AG04449 (cell line): ENCODE measurements at regions of chr22 and their contacts with region 1.

Region 1: GRCh38 chr22:45096256-45096907 is 67.3 kb upstream of the NUP50 start:
- DNase-seq: no peak
- H3K4me3 ChIP-seq: no peak overlapping the region
- CTCF ChIP-seq: peak; percentile 84

Region 2: GRCh38 chr22:44701824-44702478 is 394.4 kb before region 1 on chr22 and contains the start of gene PRR5:
- CTCF ChIA-PET with region 1: interaction called, 10 read pairs
- POLR2A ChIA-PET with region 1: no interaction called
- DNase-seq: peak; percentile 63
- H3K4me3 ChIP-seq: peak within 1 kb of the TSS; percentile 65
- CTCF ChIP-seq: no peak

Region 3: GRCh38 chr22:44819971-44820631 is 276.3 kb before region 1 on chr22:
- CTCF ChIA-PET with region 1: interaction called, 27 read pairs
- POLR2A ChIA-PET with region 1: no interaction called
- DNase-seq: no peak
- H3K4me3 ChIP-seq: no peak overlapping the region
- CTCF ChIP-seq: no peak

Region 4: DNA sequence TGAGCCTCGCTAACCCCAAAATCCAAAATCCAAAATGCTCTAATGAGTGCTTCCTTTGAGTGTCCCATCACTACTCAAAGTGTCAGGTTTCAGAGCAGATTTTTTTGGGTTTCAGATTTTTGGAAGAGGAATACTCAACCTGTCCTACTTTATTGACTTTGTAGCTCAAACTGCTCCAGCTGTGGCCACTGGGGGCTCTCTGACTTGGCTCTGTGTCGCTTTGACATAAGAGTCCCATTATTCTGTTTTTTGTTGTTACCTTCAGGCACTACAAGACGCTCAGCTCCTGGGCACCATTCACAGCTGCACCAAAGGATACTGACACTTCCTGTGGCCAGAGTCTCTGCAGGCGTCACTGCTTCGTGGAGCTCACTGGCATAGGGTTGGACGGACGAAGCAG is 127.6 kb before region 1 on chr22:
- CTCF ChIA-PET with region 1: interaction called, 11 read pairs
- POLR2A ChIA-PET with region 1: no interaction called
- DNase-seq: no peak
- H3K4me3 ChIP-seq: no peak overlapping the region
- CTCF ChIP-seq: no peak

Region 5: GRCh38 chr22:44975427-44976262 is 120.7 kb before region 1 on chr22:
- CTCF ChIA-PET with region 1: interaction called, 33 read pairs
- POLR2A ChIA-PET with region 1: no interaction called
- DNase-seq: peak; percentile 9
- H3K4me3 ChIP-seq: no peak overlapping the region
- CTCF ChIP-seq: peak; percentile 83

Region 6: DNA sequence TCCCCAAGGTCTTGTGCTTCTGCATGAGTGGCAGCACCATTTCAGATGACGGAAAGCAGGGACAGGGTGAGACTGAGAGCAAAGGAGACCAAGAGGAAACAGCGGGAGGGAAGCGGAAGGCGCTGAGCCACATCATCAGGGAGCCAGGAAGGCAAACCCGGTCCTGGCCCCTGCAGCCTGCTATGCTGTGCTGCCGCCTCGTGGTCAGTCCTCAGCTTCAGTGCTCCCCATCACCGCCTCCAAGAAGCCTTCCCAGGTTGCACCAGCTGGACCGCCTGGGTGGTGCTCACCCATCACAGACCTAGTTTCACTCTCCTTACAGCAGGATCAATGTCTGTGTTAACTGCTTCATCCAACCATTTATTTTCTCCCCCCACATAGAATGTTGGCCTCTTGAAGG is 13.6 kb before region 1 on chr22:
- CTCF ChIA-PET with region 1: interaction called, 43 read pairs
- POLR2A ChIA-PET with region 1: no interaction called
- DNase-seq: no peak
- H3K4me3 ChIP-seq: no peak overlapping the region
- CTCF ChIP-seq: peak; percentile 33

Region 7: DNA sequence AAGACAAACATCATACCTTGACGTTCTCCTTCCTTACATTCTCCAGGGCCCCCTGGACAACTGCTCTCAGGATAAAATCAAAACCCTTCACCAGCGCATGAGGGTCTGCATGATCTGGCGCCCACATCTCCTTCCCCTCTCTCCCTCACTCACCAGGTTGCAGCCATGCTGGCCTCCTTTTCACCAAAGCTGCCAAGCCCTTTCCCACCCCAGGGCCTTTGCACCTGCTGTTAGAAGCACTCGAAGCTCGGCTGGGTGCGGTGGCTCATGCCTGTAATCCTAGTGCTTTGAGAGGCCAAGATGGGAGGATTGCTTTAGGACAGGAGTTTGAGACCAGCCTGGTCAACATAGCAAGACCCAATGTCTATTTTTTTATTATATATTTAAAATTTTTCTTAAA is 11.3 kb after region 1 on chr22:
- CTCF ChIA-PET with region 1: interaction called, 18 read pairs
- POLR2A ChIA-PET with region 1: no interaction called
- DNase-seq: no peak
- H3K4me3 ChIP-seq: no peak overlapping the region
- CTCF ChIP-seq: no peak